ENCODE measurements at regions of chr14 and their contacts with region 1.

Region 1: GRCh38 chr14:92719890-92720323 is 28.5 kb downstream of the LGMN start:
- DNase-seq: no peak
- ATAC-seq: peak; percentile 45

Region 2: DNA sequence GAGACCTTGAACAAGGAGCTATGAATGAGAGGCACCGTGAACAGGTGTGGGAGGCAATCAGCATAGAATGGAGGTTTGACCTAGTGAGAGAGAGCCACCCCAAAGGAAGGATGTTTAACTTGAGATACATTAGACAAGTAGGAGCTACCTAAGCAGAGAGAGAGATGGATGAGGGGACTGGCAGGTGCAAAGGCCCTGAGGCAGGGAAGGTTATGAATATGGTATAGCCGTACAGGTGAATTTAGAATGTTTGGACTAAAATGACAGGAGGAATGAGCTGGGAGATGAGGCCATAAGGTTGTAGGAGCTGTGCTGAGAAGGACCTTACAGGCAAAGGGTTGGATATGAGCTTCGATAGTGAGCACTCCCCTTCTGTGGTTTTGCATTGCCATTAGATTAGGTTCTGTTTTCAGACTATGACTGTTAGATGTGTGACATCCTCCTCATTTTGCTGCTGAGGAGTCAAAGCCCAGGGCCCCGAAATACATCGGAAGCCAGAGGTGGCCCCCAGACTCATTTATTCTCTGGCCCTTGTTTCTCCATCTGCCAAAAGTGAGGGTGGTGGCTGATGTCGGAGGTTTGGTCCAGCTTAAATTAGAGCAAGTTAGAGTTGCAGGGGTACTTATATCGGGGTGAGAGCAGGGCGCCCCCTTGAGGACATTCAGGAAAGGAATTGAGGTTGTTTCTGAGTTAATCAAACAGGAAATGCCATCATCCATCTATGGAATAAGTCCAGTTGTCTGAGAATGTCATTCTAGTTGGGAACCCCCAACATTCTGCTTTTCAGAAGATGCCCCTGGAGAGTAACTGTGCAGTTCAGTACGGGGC is 367.5 kb before region 1 on chr14:
- intact Hi-C with region 1: no loop called
- DNase-seq: no peak
- ATAC-seq: no peak

Region 3: GRCh38 chr14:92362781-92363235 is 357.1 kb before region 1 on chr14:
- intact Hi-C with region 1: no loop called
- DNase-seq: no peak
- ATAC-seq: no peak

Region 4: DNA sequence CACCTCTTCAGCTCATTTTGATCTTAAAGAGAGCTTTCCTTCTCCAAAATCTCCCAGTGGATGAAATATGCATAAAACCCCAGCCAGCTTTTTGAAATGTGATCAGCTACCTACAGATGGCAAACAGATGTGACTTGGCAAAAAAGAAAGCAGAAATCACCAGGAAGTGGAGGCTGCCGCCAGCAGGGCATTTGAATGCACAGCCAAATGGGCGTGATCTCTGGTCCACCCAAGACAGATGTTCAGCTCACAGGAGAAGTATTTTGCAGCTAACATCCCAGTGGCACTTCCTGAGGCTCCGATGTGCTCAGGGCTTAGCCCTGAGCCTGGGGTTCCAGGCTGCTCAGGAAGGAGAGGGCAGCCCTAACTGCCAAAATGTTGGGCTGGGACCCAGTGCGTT is 49.7 kb before region 1 on chr14:
- intact Hi-C with region 1: no loop called
- DNase-seq: peak; percentile 44
- ATAC-seq: peak; percentile 76

Region 5: DNA sequence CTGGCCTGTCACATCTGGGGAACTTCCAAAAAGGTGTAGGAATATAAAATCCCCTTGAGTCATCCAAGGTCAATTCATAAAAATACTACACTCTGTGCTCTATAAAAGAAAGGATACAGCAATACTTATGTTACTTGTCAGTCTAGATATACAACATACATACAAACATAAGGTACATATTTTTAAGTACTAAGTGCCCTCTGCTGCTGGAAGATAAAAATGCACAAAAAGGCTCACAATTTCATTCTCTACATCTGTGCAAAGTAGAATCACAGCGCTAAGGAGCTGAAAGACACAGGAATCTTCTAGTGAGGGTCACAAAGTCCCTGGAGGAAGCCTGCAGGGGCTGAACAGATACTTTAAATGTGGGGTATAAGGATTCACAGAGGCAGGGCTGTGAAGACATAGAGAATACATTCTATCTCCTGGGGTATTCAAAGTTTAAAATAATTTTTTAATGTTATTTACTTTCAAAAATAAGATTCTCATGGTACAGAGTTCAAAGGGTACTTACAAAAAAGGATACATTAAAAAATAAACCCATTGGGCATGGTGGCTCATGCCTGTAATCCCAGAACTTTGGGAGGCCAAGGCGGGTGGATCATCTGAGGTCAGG is 64.0 kb after region 1 on chr14:
- intact Hi-C with region 1: loop called (anchors 2 kb)
- DNase-seq: no peak
- ATAC-seq: peak; percentile 59